ENCODE measurements at regions of chr9 and their contacts with region 1.

Region 1: DNA sequence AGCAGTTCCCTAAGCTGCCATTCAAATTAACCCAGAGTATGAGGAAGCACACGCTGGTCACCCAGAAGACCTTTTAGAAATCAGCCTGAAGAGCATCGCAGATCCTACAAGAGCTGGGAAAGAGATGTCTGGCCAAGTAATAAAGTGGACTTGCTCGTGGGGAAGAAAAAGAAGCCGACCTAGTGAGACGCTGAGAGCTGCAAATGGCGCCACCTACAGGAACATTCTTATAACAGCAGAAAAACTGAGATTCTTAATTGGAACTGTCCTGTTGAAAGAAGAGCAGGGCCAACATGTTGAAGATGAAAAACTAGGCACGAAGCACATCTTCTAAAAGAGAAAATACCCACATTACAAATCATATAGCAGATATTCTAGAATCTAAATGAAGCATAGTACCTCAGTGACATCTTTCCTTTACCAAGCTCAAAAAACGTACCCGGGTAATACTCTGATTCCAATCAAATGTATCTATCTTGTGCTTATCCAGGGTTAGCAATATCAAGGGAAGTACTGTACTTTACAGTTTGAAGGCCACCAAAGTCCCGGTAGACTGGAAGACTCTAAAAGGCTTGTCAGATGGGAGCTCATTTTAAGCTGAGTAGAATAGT is 3.9 kb upstream of the GNAQ start:
- DNase-seq: peak; percentile 38
- H3K4me3 Mint-ChIP-seq: no peak overlapping the region
- H3K27ac Mint-ChIP-seq: peak overlapping the region; percentile 12
- H3K4me1 Mint-ChIP-seq: peaks cover 37% of the 10 kb centered on the region
- H3K27me3 Mint-ChIP-seq: no peaks in the 10 kb centered on the region

Region 2: DNA sequence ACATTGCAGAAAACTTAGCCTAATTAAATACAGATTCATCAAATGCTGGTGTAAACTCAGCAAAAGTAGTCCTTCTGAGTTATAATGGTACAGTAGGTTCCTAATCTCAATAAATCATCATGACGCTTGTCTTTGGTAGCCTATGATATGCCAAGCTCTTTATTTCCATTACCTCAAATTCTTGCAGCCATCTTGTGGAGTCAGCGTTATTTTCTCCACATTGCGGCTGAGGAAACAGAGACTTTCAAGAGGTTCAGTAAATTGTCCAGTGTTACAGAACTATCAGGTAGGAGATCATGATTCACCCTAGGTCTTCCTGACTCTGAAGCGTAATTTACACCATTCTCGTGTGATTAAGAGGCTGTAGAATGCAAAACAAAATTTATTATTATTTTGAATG is 1907.9 kb before region 1 on chr9:
- intact Hi-C with region 1: no loop called
- DNase-seq: no peak
- H3K4me3 Mint-ChIP-seq: no peak overlapping the region
- H3K27ac Mint-ChIP-seq: no peak overlapping the region
- H3K4me1 Mint-ChIP-seq: no peaks in the 10 kb centered on the region
- H3K27me3 Mint-ChIP-seq: no peaks in the 10 kb centered on the region

Region 3: GRCh38 chr9:77456829-77457437 is 578.6 kb before region 1 on chr9:
- intact Hi-C with region 1: loop called (anchors 2 kb)
- DNase-seq: peak; percentile 71
- H3K4me3 Mint-ChIP-seq: no peak overlapping the region
- H3K27ac Mint-ChIP-seq: no peak overlapping the region
- H3K4me1 Mint-ChIP-seq: peaks cover 25% of the 10 kb centered on the region
- H3K27me3 Mint-ChIP-seq: peaks cover 4% of the 10 kb centered on the region

Region 4: DNA sequence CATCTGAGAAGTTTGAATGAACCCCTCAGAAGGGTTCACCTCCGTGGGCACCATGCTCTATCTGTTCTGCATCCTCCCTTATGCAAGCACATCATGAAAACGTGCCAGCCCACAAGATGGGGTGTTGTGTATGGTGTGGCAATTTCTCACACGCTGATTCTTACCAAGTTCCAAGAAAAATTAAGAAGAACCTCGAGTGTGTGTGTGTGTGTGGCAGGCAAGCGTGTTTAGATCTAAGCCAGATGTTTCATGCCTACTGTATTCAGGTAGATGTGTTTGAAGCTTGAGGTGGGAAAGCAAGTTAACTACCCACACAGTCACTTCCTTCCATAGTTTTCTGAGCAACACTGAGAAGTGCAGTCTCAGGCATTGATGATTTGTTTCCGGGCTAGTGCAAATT is 309.7 kb before region 1 on chr9:
- intact Hi-C with region 1: loop called (anchors 10 kb)
- DNase-seq: peak; percentile 8
- H3K4me3 Mint-ChIP-seq: peak overlapping the region; percentile 37
- H3K27ac Mint-ChIP-seq: peak overlapping the region; percentile 92
- H3K4me1 Mint-ChIP-seq: peaks cover 41% of the 10 kb centered on the region
- H3K27me3 Mint-ChIP-seq: no peaks in the 10 kb centered on the region

Region 5: DNA sequence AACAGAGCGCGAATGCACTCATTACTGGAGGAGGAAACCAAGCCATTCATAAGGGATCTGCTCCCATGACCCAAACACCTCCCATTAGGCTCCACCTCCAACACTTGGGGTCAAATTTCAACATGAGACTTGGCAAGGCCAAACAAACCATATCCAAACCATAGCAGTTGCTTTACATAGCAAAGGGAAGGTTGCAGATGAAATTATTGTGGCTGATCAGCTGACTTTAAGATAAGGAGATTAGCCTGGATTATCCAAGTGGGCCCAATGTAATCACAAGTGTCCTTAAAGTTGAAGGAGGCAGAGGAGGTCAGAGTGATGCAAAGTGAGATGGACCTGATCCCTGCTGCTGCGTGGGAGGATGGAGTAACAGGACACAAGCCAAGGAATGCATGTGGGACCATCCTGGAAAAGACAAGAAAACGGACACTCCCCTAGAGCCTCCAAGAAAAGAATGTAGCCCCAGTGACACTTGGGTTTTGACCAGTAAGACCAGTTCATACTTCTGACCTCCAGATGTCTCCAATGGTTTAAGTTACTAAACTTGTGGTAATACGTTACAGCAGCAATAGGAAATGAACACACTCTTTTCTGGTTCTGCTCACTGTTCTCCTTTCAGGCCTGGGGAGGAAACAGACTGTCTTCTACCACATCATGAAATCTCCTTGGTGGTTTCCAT is 171.1 kb before region 1 on chr9:
- intact Hi-C with region 1: loop called (anchors 1 kb)
- DNase-seq: no peak
- H3K4me3 Mint-ChIP-seq: no peak overlapping the region
- H3K27ac Mint-ChIP-seq: no peak overlapping the region
- H3K4me1 Mint-ChIP-seq: peaks cover 14% of the 10 kb centered on the region
- H3K27me3 Mint-ChIP-seq: no peaks in the 10 kb centered on the region

Region 6: GRCh38 chr9:78121488-78121887 is 86.0 kb after region 1 on chr9:
- intact Hi-C with region 1: loop called (anchors 1 kb)
- DNase-seq: no peak
- H3K4me3 Mint-ChIP-seq: no peak overlapping the region
- H3K27ac Mint-ChIP-seq: no peak overlapping the region
- H3K4me1 Mint-ChIP-seq: peaks cover 31% of the 10 kb centered on the region
- H3K27me3 Mint-ChIP-seq: no peaks in the 10 kb centered on the region

Region 7: DNA sequence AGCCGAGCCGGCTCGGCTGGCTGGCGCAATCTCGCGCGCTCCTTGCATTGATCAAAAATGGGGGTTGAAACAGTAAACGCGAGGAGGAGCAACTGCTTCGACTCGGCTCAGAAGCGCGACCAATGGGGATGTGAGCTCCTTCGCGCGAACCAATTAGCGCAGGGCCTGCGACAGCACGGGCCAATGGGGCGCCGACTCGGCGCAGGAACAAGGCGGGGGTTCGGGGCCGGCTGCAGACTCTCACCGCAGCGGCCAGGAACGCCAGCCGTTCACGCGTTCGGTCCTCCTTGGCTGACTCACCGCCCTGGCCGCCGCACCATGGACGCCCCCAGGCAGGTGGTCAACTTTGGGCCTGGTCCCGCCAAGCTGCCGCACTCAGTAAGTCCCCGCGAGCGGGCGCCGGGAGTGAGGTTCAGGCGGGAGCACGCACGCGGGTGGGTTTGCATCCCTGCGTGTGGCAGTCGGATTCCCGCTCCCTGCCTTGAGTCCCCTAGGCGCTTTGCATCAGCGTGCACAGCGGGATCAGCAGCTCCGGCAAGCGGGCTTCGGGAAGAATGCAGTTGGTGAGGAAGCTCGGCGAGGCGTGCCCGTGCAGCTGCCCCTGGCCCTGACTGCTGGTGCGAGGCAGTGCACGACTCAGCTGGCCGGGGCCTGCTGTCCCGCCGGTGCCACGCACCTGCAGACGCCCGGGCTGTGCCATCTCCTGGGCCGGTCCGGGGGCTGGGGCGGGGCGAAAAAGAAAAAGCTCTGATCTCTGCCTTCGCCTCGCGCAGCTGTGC is 261.6 kb after region 1 on chr9 and contains the start of gene PSAT1:
- intact Hi-C with region 1: loop called (anchors 5 kb)
- DNase-seq: peak; percentile 92
- H3K4me3 Mint-ChIP-seq: peak within 1 kb of the TSS; percentile 91
- H3K27ac Mint-ChIP-seq: peak within 1 kb of the TSS; percentile 91
- H3K4me1 Mint-ChIP-seq: peaks cover 61% of the 10 kb centered on the region
- H3K27me3 Mint-ChIP-seq: no peaks in the 10 kb centered on the region
- total RNA-seq, gene PSAT1: 85.7 and 91.8 TPM in 2 replicates